GM12878 (cell line): ENCODE measurements at regions of chr20 and their contacts with region 1.

Region 1: GRCh38 chr20:10434832-10435812 is at the start of gene SLX4IP:
- DNase-seq: peak; percentile 88
- ATAC-seq: peak; percentile 75
- H3K4me3 ChIP-seq: peak within 1 kb of the TSS; percentile 97
- H3K27ac ChIP-seq: peak within 1 kb of the TSS; percentile 87
- H3K4me1 ChIP-seq: peaks cover 15% of the 10 kb centered on the region; the same call in 1 of the 2 replicates
- H3K27me3 ChIP-seq: no peaks in the 10 kb centered on the region
- CTCF ChIP-seq: no peak
- EP300 ChIP-seq: no peak
- POLR2A ChIP-seq: peak; percentile 81
- RAD21 ChIP-seq: no peak
- polyA plus RNA-seq, gene SLX4IP: 3.0 to 8.0 TPM

Region 2: GRCh38 chr20:10447027-10447426 is 11.9 kb after region 1 on chr20:
- CTCF ChIA-PET with region 1: interaction called, 12 read pairs
- POLR2A ChIA-PET with region 1: interaction called, 15 read pairs
- RAD21 ChIA-PET with region 1: interaction called, 14 read pairs
- SMC1A ChIA-PET with region 1: interaction called, 22 read pairs
- in situ Hi-C with region 1: no loop called
- intact Hi-C with region 1: no loop called
- DNase-seq: peak; percentile 92
- ATAC-seq: peak; percentile 96
- H3K4me3 ChIP-seq: peak overlapping the region; percentile 46; the same call in 1 of the 2 replicates
- H3K27ac ChIP-seq: peak overlapping the region; percentile 57; the same call in 1 of the 2 replicates
- H3K4me1 ChIP-seq: peaks cover 18% of the 10 kb centered on the region
- H3K27me3 ChIP-seq: no peaks in the 10 kb centered on the region
- CTCF ChIP-seq: peak in 1 of 3 experiments; percentile 26; a peak in 1 of 6 replicates
- EP300 ChIP-seq: peak; percentile 75 to 91
- POLR2A ChIP-seq: no peak
- RAD21 ChIP-seq: peak; percentile 17; the same call in 1 of the 2 replicates

Region 3: GRCh38 chr20:10453241-10453640 is 18.1 kb after region 1 on chr20:
- CTCF ChIA-PET with region 1: interaction called, 8 read pairs
- POLR2A ChIA-PET with region 1: interaction called, 15 read pairs
- RAD21 ChIA-PET with region 1: interaction called, 14 read pairs
- SMC1A ChIA-PET with region 1: interaction called, 22 read pairs
- in situ Hi-C with region 1: no loop called
- intact Hi-C with region 1: no loop called
- DNase-seq: peak; percentile 66
- ATAC-seq: peak; percentile 95
- H3K4me3 ChIP-seq: no peak overlapping the region
- H3K27ac ChIP-seq: peak overlapping the region; percentile 73
- H3K4me1 ChIP-seq: peaks cover 17% of the 10 kb centered on the region
- H3K27me3 ChIP-seq: no peaks in the 10 kb centered on the region
- CTCF ChIP-seq: no peak
- EP300 ChIP-seq: peak; percentile 36 to 60; a peak in 2 of 4 replicates
- POLR2A ChIP-seq: no peak
- RAD21 ChIP-seq: no peak

Region 4: DNA sequence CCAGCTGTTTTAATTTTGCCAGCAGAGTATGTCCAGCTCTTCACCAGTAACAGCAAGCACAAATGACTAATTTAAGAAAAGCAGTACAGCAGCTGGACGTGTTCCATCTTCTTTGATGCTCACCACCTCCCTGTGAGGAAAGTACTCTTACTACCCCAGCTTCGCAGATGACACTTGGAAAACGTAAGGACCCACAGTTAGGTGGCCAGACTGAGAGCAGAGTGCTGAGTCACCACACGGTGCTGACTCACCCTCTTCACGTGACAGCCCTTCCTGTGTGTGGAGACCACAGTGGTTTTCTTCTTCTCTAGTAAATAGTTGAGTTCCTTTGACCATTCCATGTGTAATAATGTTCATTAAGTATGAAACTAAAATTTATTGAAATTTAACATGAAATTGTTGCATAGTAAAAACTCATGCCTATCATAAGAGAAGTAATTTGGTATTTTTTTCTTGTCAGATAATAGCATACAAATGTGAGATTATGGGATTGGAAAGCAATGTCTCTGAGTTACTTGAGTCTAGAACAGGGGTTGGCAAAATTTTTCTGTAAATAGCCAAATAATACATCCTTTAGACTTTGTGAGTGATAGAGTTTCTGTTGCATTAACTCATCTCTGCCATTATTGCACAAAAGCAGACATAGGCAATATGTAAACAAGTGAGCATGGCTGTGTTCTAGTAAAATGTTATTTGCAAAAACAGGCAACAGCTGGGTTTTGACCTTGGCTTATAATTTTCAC is 76.6 kb after region 1 on chr20:
- CTCF ChIA-PET with region 1: interaction called, 3 read pairs
- POLR2A ChIA-PET with region 1: interaction called, 3 read pairs
- RAD21 ChIA-PET with region 1: interaction called, 3 read pairs
- SMC1A ChIA-PET with region 1: interaction called, 6 read pairs
- in situ Hi-C with region 1: no loop called
- intact Hi-C with region 1: loop called (anchors 5 kb)
- DNase-seq: peak; percentile 94
- ATAC-seq: peak; percentile 98
- H3K4me3 ChIP-seq: no peak overlapping the region; the same call in 1 of the 2 replicates
- H3K27ac ChIP-seq: peak overlapping the region; percentile 87
- H3K4me1 ChIP-seq: peaks cover 32% of the 10 kb centered on the region
- H3K27me3 ChIP-seq: no peaks in the 10 kb centered on the region
- CTCF ChIP-seq: 0 out of 6 replicates have a peak, but pooled peaks of 1 of the 3 experiments have one; percentile 2
- EP300 ChIP-seq: peak; percentile 55 to 78; a peak in 3 of 4 replicates
- POLR2A ChIP-seq: peak; percentile 57
- RAD21 ChIP-seq: 0 out of 2 replicates have a peak, but pooled peaks have one; percentile 5

Region 5: GRCh38 chr20:11159728-11160127 is 724.6 kb after region 1 on chr20:
- CTCF ChIA-PET with region 1: no interaction called
- POLR2A ChIA-PET with region 1: no interaction called
- RAD21 ChIA-PET with region 1: no interaction called
- SMC1A ChIA-PET with region 1: no interaction called
- in situ Hi-C with region 1: no loop called
- intact Hi-C with region 1: no loop called
- DNase-seq: peak; percentile 23
- ATAC-seq: peak; percentile 81
- H3K4me3 ChIP-seq: no peak overlapping the region
- H3K27ac ChIP-seq: no peak overlapping the region
- H3K4me1 ChIP-seq: no peaks in the 10 kb centered on the region
- H3K27me3 ChIP-seq: no peaks in the 10 kb centered on the region
- CTCF ChIP-seq: no peak
- EP300 ChIP-seq: 0 out of 4 replicates have a peak, but pooled peaks of 1 of the 2 experiments have one; percentile 19
- POLR2A ChIP-seq: no peak
- RAD21 ChIP-seq: no peak

Region 6: GRCh38 chr20:11379257-11380011 is 944.3 kb after region 1 on chr20:
- CTCF ChIA-PET with region 1: no interaction called
- POLR2A ChIA-PET with region 1: no interaction called
- RAD21 ChIA-PET with region 1: no interaction called
- SMC1A ChIA-PET with region 1: no interaction called
- in situ Hi-C with region 1: no loop called
- intact Hi-C with region 1: loop called (anchors 10 kb)
- DNase-seq: no peak
- ATAC-seq: peak; percentile 31
- H3K4me3 ChIP-seq: no peak overlapping the region
- H3K27ac ChIP-seq: no peak overlapping the region
- H3K4me1 ChIP-seq: peaks cover 9% of the 10 kb centered on the region
- H3K27me3 ChIP-seq: no peaks in the 10 kb centered on the region
- CTCF ChIP-seq: no peak
- EP300 ChIP-seq: no peak
- POLR2A ChIP-seq: no peak
- RAD21 ChIP-seq: no peak

Region 7: GRCh38 chr20:11454966-11455799 is 1020.1 kb after region 1 on chr20:
- CTCF ChIA-PET with region 1: no interaction called
- POLR2A ChIA-PET with region 1: no interaction called
- RAD21 ChIA-PET with region 1: interaction called, 3 read pairs
- SMC1A ChIA-PET with region 1: interaction called, 3 read pairs
- in situ Hi-C with region 1: no loop called
- intact Hi-C with region 1: loop called (anchors 10 kb)
- DNase-seq: no peak
- ATAC-seq: peak; percentile 66
- H3K4me3 ChIP-seq: no peak overlapping the region
- H3K27ac ChIP-seq: no peak overlapping the region
- H3K4me1 ChIP-seq: no peaks in the 10 kb centered on the region
- H3K27me3 ChIP-seq: no peaks in the 10 kb centered on the region
- CTCF ChIP-seq: no peak
- EP300 ChIP-seq: peak in 1 of 2 experiments; percentile 62; a peak in 1 of 4 replicates
- POLR2A ChIP-seq: no peak
- RAD21 ChIP-seq: no peak